ENCODE measurements at regions of chr14 and their contacts with region 1.

Region 1: GRCh38 chr14:25150934-25151790 is 101.2 kb upstream of the STXBP6 start:
- DNase-seq: no peak
- H3K4me3 ChIP-seq: no peak overlapping the region
- H3K27ac ChIP-seq: no peak overlapping the region
- H3K4me1 ChIP-seq: no peaks in the 10 kb centered on the region
- H3K27me3 ChIP-seq: no peaks in the 10 kb centered on the region
- CTCF ChIP-seq: peak; percentile 48 to 71 (median 62)
- POLR2A ChIP-seq: no peak

Region 2: GRCh38 chr14:24875991-24876878 is 274.9 kb before region 1 on chr14:
- intact Hi-C with region 1: no loop called
- DNase-seq: no peak
- H3K4me3 ChIP-seq: no peak overlapping the region
- H3K27ac ChIP-seq: no peak overlapping the region
- H3K4me1 ChIP-seq: no peaks in the 10 kb centered on the region
- H3K27me3 ChIP-seq: no peaks in the 10 kb centered on the region
- CTCF ChIP-seq: no peak
- POLR2A ChIP-seq: no peak

Region 3: DNA sequence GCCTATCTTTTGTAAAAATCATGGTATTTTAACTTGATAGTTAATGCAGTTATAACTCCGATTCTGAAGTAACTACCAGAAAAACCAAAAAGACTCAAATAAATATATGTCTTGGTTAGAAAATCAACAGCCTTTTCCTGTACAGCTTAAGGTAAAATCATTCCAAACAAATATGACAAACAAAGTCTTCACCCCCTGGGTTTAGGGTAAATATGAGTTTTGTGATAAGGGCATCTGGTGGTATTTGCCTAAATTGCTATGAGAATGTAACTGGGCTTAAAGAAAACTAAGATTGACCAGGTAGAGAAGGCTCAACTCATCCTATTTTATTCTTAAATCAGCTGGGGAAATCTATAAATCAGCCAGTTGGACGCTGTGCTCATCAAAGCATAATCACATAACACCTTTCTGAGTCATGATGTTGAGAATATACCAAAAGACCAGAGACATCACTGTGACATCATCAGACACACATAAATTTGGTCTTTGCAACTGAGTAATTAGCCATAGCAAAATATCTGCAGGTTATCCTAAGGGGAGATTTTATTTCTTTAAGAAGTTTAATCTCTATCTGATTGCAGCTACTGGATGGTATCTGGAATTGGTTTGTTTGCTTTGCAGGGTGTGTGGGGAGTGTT is 235.1 kb before region 1 on chr14:
- intact Hi-C with region 1: loop called (anchors 5 kb)
- DNase-seq: no peak
- H3K4me3 ChIP-seq: no peak overlapping the region
- H3K27ac ChIP-seq: no peak overlapping the region
- H3K4me1 ChIP-seq: peaks cover 10% of the 10 kb centered on the region
- H3K27me3 ChIP-seq: no peaks in the 10 kb centered on the region
- CTCF ChIP-seq: no peak
- POLR2A ChIP-seq: no peak

Measured in vagina (tissue), 2 donors.